T-cell (primary cell): ENCODE measurements at regions of chr6 and their contacts with region 1.

Region 1: GRCh38 chr6:24648276-24648675 is 2.3 kb upstream of the KIAA0319 start:
- DNase-seq: no peak
- ATAC-seq: no peak
- H3K4me3 ChIP-seq: no peak overlapping the region
- H3K4me3 Mint-ChIP-seq: no peak overlapping the region
- H3K27ac ChIP-seq: no peak overlapping the region
- H3K27ac Mint-ChIP-seq: no peak overlapping the region
- H3K4me1 ChIP-seq: peaks cover 7 to 10% of the 10 kb centered on the region in 2 experiments
- H3K4me1 Mint-ChIP-seq: peaks cover 12 to 17% (median 14%) of the 10 kb centered on the region in 3 donors
- H3K27me3 ChIP-seq: peaks cover 3 to 10% of the 10 kb centered on the region in 2 experiments
- H3K27me3 Mint-ChIP-seq: peaks cover 0 to 22% of the 10 kb centered on the region in 2 donors

Region 2: GRCh38 chr6:24680582-24680981 is 32.3 kb after region 1 on chr6:
- CTCF ChIA-PET with region 1: interaction called in 1 of 2 experiments, 14 read pairs
- POLR2A ChIA-PET with region 1: no interaction called
- DNase-seq: no peak
- ATAC-seq: no peak
- H3K4me3 ChIP-seq: no peak overlapping the region
- H3K4me3 Mint-ChIP-seq: no peak overlapping the region
- H3K27ac ChIP-seq: no peak overlapping the region
- H3K27ac Mint-ChIP-seq: no peak overlapping the region
- H3K4me1 ChIP-seq: no peaks in the 10 kb centered on the region
- H3K4me1 Mint-ChIP-seq: peaks cover 2 to 4% (median 3%) of the 10 kb centered on the region in 3 donors
- H3K27me3 ChIP-seq: no peaks in the 10 kb centered on the region
- H3K27me3 Mint-ChIP-seq: no peaks in the 10 kb centered on the region